ENCODE measurements at regions of chr7 and their contacts with region 1.

Region 1: GRCh38 chr7:88184848-88185304 is 35.0 kb downstream of the SRI start:
- DNase-seq: no peak
- CTCF ChIP-seq: no peak

Region 2: DNA sequence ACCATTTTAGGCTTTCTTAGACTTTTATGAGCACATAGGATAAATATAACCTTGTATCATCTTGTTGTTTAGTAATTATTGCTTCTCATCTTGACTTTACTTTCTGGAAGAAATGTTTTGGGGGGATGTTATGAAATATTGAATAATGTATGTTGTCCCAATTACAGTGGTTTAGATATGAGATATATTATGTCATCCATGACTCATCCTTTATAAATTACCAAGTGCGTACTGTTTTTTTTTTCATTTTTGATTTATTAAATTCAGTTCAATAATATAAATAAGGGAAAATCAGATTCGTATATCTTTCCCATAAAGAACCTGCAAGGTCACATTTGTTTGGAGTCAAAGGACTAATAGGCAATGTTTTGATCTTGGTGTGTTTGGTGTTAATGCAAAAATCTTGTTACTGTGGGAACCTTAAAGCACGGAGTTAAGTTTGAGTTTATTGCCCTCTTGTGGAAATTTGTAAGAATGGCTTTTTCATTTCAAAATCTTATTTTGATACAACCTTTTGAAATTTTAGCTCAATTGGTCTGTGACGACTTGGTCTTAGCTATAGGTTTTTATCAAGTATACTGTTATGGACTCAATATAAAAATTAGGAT is 73.6 kb before region 1 on chr7:
- CTCF ChIA-PET with region 1: no interaction called
- POLR2A ChIA-PET with region 1: no interaction called
- DNase-seq: peak; percentile 45
- CTCF ChIP-seq: peak; percentile 52

Region 3: DNA sequence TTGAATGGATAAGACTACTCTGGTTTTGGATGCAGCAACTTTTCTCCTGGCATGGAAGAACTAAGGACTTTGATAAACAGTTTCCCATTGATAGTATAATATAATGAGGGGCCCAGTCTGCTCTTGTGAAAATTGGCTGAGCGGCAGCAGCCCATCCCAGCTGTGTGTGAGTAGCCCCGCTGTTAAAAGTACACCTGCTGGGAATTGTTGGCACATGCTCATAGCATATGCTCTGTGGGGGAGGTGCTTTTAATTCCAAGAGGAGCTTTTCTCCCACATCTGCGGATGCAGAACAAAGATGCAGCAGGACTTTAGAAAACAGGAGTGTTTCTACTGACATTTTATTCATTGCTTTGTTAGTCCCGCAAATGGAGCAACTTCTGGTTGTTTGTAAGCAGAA is 15.9 kb after region 1 on chr7:
- CTCF ChIA-PET with region 1: interaction called, 17 read pairs
- POLR2A ChIA-PET with region 1: no interaction called
- DNase-seq: no peak
- CTCF ChIP-seq: no peak